GM13976 (cell line): ENCODE measurements at regions of chr2 and their contacts with region 1.

Region 1: DNA sequence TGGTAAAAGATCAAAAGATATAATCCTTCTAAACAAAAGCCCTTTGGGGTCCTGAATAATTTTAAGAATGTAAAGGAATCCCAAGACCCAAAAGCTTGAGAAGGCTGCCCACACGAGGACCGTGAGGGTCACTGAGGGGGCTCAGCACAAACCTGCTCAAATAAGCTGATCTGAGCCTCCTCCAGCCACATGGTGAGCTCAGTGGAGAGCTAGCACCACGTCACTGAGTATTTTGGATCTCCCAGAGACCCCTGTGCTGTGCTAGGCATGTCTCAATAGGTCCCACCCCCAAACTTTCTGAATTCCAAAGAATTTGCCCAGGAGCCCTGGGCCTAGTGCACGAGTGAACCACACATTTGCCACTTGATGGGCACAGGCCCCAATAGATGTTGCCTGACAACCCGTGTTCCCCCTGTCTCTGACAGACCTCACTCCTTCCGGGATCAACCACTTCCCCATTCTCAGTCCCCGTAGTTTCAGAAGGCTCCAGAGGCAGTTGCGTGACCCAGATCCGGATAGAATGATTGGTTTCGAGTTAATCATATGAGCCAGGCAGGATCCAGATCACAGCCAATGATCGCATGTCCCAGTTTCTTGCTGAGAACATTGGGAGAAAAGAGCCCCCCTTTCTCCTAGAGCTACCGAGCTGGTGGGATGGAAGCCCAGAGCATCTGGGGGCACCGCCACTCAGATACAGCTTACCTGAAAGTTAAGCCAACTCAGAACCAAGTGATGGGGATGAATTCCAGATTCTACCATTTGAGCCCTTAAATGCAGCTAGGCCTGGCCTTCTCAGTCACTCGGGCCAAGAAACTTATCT is 203.8 kb downstream of the TNS1 start:
- DNase-seq: peak; percentile 36
- CTCF ChIP-seq: no peak

Region 2: GRCh38 chr2:217242947-217243346 is 556.0 kb before region 1 on chr2:
- in situ Hi-C with region 1: no loop called
- DNase-seq: no peak
- CTCF ChIP-seq: no peak

Region 3: DNA sequence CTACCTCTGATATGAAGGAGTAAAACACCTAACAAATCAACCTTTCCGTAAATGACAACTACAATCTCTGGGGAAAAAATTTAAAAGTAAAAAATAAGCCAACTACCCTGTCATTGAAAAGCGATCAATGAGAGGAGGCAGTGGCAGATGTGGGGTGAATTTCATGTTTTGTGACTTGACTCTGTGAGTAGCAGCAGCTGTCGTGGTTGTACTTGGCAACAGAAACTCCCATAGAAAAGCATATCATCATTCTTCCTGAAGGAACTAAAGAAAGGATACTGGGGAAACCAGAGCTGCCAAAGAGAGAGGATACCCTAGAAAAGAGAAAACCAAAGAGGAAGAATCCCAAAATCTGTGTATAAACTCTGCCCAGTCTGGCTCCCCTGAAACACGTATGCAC is 32.6 kb before region 1 on chr2:
- in situ Hi-C with region 1: no loop called
- DNase-seq: no peak
- CTCF ChIP-seq: no peak

Region 4: DNA sequence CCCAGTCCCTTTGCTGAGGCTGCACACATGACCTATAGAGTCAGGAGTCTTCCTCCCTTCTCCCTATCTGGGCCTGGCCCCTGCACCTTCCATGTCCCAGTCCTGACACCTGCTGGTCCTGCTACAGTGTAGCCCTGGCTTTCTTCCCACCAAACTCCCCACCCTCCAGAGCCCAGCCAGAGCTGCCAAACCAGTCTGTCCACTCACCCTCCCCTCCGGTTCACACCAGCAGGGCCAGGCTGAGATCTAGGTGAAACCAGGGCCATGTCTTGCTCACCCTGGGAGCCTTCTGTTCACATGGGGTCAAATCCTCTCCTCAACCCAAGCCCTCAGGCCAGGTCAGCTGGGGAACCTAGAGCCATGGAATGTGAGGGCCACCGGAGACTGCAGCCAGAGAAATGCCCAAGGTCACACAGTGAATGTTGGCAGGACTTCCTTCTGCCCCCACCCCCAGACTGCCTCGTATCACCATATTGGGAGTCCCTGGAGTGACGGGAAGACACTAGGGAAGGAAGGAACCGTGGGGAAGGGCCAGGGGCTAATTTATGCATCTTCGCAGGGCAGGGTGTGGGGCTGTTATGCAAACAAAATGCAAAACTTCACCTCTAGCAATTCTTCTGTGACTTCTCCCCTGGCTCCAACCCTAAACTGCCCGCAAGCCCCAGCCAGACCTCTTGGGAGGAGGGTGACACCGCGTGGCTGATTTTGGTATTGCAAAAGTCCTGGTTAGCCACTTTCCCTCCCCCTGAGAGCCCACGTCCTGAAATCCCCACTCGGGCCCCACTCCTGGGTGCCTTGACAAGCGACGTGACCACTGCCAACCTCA is 189.3 kb after region 1 on chr2:
- in situ Hi-C with region 1: loop called (anchors 10 kb)
- DNase-seq: peak; percentile 85
- CTCF ChIP-seq: peak; percentile 76